ENCODE measurements at regions of chr2 and their contacts with region 1.

Region 1: GRCh38 chr2:65129826-65130663 is at the start of gene RAB1A:
- DNase-seq: peak; percentile 100
- H3K4me3 ChIP-seq: peak within 1 kb of the TSS; percentile 100
- H3K27ac ChIP-seq: peak within 1 kb of the TSS; percentile 98
- H3K4me1 ChIP-seq: peaks cover 23% of the 10 kb centered on the region
- H3K27me3 ChIP-seq: no peaks in the 10 kb centered on the region
- CTCF ChIP-seq: peak; percentile 51
- total RNA-seq, gene RAB1A: 119 and 122 TPM in 2 replicates

Region 2: DNA sequence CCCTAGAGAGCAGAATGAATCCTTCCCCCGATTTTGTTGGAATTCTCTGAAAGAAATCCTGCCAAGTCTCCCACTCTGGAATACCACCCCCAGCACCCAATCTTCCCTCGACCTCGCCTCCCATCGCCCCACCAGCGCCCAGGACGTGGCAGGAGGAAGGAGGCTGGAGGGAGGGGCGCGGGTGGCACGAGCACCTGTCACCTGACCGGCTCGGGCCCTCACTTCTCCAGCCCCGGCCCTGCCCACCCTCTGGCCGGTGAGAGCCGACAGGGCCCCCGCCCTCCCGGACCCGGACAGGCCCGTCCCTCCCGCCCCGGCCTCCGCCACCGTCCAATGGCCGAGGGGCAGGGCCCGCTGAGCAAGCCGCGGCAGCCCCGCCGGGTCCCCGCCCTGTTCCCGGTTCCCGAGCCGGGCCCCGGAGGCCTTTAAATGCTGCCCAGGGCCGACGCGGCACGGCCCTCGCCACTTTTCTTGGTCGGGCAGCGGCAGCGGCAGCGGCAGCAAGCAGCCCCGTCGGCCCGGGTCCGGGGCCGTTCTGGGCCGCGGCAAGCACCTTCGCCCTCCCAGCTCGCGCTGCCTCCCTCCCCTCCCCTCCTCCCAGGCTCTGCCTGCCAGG is 676.2 kb before region 1 on chr2 and contains the start of gene LGALSL:
- CTCF ChIA-PET with region 1: no interaction called
- POLR2A ChIA-PET with region 1: interaction called, 12 read pairs
- intact Hi-C with region 1: no loop called
- DNase-seq: no peak
- H3K4me3 ChIP-seq: peak within 1 kb of the TSS; percentile 76
- H3K27ac ChIP-seq: peak within 1 kb of the TSS; percentile 67
- H3K4me1 ChIP-seq: peaks cover 12% of the 10 kb centered on the region
- H3K27me3 ChIP-seq: no peaks in the 10 kb centered on the region
- CTCF ChIP-seq: no peak
- total RNA-seq, gene LGALSL: 5.9 and 7.4 TPM in 2 replicates

Region 3: GRCh38 chr2:64737547-64737946 is 392.5 kb before region 1 on chr2:
- CTCF ChIA-PET with region 1: no interaction called
- POLR2A ChIA-PET with region 1: no interaction called
- intact Hi-C with region 1: no loop called
- DNase-seq: no peak
- H3K4me3 ChIP-seq: no peak overlapping the region
- H3K27ac ChIP-seq: no peak overlapping the region
- H3K4me1 ChIP-seq: no peaks in the 10 kb centered on the region
- H3K27me3 ChIP-seq: no peaks in the 10 kb centered on the region
- CTCF ChIP-seq: no peak

Region 4: DNA sequence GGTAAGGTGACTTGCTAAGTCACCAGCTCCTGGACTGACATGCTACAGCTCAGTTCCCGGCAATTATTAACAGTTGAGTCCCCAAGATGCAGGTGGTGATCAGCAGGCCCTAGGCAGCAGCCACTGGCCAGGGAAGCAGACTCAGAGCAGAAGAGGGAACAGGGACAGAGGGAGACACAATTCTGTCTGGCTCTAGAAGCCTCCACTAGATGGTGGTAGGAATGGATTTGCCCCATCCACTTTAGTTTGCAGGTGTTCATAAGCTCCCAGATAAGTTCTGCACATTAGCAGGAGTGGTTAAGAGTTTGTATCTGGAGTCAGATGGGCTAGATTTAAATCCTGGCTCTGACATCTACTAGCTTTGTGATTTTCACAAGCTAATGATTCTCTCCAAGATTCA is 166.3 kb before region 1 on chr2:
- CTCF ChIA-PET with region 1: no interaction called
- POLR2A ChIA-PET with region 1: no interaction called
- intact Hi-C with region 1: no loop called
- DNase-seq: no peak
- H3K4me3 ChIP-seq: no peak overlapping the region
- H3K27ac ChIP-seq: no peak overlapping the region
- H3K4me1 ChIP-seq: no peaks in the 10 kb centered on the region
- H3K27me3 ChIP-seq: no peaks in the 10 kb centered on the region
- CTCF ChIP-seq: no peak

Region 5: DNA sequence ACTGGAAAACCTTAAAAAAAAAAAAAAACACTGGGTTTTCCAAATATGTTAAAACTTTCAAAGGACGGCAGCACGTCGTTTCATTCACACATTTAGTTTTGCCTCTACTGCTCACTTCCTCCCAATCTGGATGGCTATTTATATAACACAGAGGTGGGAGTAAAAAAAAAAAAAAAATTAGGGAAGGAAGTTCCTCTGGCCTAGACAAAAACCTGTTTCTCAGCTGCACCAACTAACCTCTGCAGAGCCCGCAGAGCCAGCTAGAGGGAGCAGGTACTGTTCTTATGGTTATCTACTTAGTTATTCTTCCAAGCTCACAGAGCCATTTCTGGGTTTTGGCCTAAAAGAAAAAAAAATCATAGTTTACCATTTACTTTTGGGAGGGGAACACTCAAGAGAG is 112.7 kb before region 1 on chr2:
- CTCF ChIA-PET with region 1: no interaction called
- POLR2A ChIA-PET with region 1: no interaction called
- intact Hi-C with region 1: no loop called
- DNase-seq: no peak
- H3K4me3 ChIP-seq: no peak overlapping the region
- H3K27ac ChIP-seq: no peak overlapping the region
- H3K4me1 ChIP-seq: no peaks in the 10 kb centered on the region
- H3K27me3 ChIP-seq: no peaks in the 10 kb centered on the region
- CTCF ChIP-seq: peak; percentile 22; the same call in 1 of the 2 replicates

Region 6: DNA sequence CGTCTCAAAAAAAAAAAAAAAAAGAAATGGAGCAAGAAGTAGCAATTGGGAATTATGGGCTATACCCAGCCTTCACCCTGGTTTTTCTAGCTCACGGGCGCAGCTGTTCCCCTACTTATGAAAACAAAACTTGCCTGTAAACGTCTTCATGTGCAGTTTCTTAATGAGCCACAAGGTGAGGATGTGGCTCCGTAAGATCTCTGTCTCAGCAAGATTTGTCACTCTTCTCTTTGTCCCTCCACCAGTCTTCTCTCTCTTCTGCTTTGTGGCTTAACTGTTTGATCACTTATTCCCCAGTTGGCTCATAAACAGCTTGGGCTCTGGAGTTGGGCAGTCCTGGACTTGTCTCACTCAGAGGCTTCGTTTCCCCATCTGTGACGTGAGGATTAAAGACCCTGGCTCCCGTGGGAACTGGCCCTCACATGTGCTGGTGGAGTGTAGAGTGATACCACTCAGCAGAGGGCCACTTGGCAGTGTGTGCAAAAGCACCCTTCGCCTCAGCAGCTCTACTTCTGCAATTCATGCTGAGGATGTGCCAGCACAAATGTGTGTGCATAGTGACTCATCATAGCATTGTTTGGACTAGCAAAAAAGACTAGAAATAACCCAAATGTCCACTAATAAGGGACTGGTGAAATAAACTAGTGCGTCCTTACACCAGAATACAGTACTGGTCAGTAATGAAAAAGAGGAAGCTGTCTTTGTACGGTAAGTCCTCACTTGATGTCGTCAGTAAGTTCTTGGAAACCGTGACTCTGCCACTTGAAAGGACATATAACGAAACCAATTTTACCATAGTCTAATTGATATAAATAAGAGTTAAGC is 65.1 kb before region 1 on chr2:
- CTCF ChIA-PET with region 1: interaction called, 14 read pairs
- POLR2A ChIA-PET with region 1: no interaction called
- intact Hi-C with region 1: no loop called
- DNase-seq: peak; percentile 82
- H3K4me3 ChIP-seq: no peak overlapping the region
- H3K27ac ChIP-seq: peak overlapping the region; percentile 36
- H3K4me1 ChIP-seq: peaks cover 8% of the 10 kb centered on the region
- H3K27me3 ChIP-seq: no peaks in the 10 kb centered on the region
- CTCF ChIP-seq: peak; percentile 73

Region 7: DNA sequence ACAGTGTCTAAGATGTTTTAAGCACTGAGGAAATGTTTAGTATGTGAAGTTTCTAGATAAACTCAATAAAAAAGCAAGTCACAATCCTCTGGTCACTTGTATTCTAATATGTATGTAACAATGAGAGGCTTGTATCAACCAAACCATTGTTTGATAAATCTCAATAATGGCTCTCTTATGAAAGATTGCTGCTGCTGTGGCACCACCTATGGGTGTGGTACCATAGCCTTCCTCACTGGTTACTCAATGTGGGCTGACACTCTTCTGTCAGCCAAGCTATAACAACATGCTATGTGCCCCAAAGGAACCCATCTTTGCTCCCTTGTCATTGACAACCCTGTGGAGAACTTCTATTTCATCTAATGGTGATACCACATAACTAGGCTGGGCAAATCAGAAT is 12.5 kb after region 1 on chr2:
- CTCF ChIA-PET with region 1: no interaction called
- POLR2A ChIA-PET with region 1: interaction called, 21 read pairs
- intact Hi-C with region 1: no loop called
- DNase-seq: no peak
- H3K4me3 ChIP-seq: no peak overlapping the region
- H3K27ac ChIP-seq: no peak overlapping the region
- H3K4me1 ChIP-seq: no peaks in the 10 kb centered on the region
- H3K27me3 ChIP-seq: no peaks in the 10 kb centered on the region
- CTCF ChIP-seq: peak; percentile 36; the same call in 1 of the 2 replicates

Region 8: DNA sequence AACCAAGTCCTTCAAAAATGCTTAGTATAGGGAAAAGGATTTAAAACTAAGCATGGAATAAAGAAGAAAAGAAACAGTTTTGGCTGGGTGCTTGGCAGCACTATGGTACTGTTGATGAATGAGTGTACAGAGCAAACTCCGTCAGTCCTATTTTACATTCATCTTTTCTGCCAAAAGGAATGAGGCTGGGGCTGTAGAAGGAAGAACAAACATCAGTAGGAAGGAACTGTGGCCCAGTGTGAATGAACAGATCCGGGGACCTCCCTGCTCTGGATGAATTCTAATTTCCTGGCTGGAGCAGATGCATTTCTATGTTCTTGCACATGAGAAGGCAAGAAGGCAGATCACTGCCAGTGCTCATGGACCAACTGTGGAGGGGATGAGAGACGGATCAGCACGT is 830.9 kb after region 1 on chr2:
- CTCF ChIA-PET with region 1: no interaction called
- POLR2A ChIA-PET with region 1: interaction called, 19 read pairs
- intact Hi-C with region 1: no loop called
- DNase-seq: no peak
- H3K4me3 ChIP-seq: no peak overlapping the region
- H3K27ac ChIP-seq: no peak overlapping the region
- H3K4me1 ChIP-seq: no peaks in the 10 kb centered on the region
- H3K27me3 ChIP-seq: no peaks in the 10 kb centered on the region
- CTCF ChIP-seq: no peak